Ascending aorta (tissue), 2 donors: ENCODE measurements at regions of chrX and their contacts with region 1.

Region 1: DNA sequence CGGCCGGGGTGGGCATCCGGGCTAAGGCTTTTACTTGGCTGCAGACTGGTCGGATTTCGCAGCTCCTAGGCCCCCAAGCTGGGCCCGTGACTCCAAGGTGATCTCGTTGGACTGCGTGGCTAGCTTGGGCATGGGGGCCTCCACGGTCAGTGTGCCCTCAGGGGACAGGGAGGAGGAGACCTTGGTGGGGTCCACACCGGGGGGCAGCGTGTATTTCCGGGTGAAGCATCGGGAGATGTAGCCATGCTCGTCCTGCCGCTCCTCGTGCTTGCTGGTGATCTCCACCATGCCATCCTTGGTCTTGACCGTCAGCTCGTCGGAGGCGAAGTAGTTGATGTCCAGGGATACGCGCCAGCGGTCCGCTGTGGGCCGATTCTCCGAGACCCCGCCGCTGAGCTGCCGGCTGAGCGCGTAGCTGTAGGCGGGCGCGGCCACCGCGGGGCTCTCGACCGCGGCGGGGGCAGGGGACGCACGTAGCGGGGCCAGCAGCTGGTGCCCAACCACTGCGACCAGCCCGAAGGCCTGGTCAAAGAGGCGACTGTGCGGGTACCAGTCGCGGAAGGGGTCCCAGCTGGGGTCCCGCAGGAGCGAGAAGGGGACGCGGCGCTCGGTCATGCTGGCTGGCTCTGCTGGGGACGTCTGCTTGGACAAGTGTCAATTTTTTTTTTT is 881 bp upstream of the CACNA1F start:
- DNase-seq: no peak
- H3K4me3 ChIP-seq: no peak overlapping the region
- H3K27ac ChIP-seq: no peak overlapping the region
- H3K4me1 ChIP-seq: no peaks in the 10 kb centered on the region
- H3K27me3 ChIP-seq: no peaks in the 10 kb centered on the region
- CTCF ChIP-seq: no peak

Region 2: DNA sequence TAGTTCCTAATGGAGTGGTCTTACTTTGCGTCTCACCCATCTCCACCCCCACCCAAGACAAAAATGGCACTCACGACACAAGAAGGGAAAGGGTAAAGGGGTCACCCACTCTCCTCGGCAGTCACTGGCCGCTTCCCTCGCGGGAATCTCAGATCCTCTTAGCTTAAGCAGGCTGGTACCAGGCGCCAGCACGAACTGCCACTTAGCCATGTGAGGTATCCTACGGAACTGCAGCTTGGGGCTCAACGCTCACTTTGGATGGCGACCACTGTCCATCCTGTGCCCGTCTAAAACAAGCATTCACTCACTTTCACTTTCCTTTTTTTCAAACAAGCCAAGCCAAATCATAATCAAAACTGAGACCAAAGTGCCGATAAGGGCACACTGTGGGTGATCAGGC is 86.1 kb before region 1 on chrX:
- intact Hi-C with region 1: no loop called
- DNase-seq: no peak
- H3K4me3 ChIP-seq: no peak overlapping the region
- H3K27ac ChIP-seq: no peak overlapping the region
- H3K4me1 ChIP-seq: no peaks in the 10 kb centered on the region
- H3K27me3 ChIP-seq: no peaks in the 10 kb centered on the region
- CTCF ChIP-seq: no peak

Region 3: GRCh38 chrX:49199906-49200771 is 33.9 kb before region 1 on chrX and contains the start of gene SYP:
- intact Hi-C with region 1: loop called (anchors 2 kb)
- DNase-seq: peak; percentile 65 to 95
- H3K4me3 ChIP-seq: peak within 1 kb of the TSS; percentile 33 to 61
- H3K27ac ChIP-seq: peak within 1 kb of the TSS; percentile 51 to 59
- H3K4me1 ChIP-seq: no peaks in the 10 kb centered on the region
- H3K27me3 ChIP-seq: no peaks in the 10 kb centered on the region
- CTCF ChIP-seq: no peak
- total RNA-seq, gene SYP: 0.53 TPM